K562 (cell line): ENCODE measurements at regions of chr20 and their contacts with region 1.

Region 1: GRCh38 chr20:37850724-37851355 is 52.1 kb upstream of the VSTM2L start:
- DNase-seq: peak; percentile 42 to 94 (median 68)
- ATAC-seq: peak; percentile 96
- H3K4me3 ChIP-seq: no peak overlapping the region
- H3K27ac ChIP-seq: peak overlapping the region; percentile 49
- H3K4me1 ChIP-seq: peaks cover 16 to 30% of the 10 kb centered on the region in 2 experiments; a peak in 4 of 5 replicates
- H3K27me3 ChIP-seq: no peaks in the 10 kb centered on the region
- CTCF ChIP-seq: no peak
- EP300 ChIP-seq: peak; percentile 97
- POLR2A ChIP-seq: no peak
- RAD21 ChIP-seq: peak in 1 of 2 experiments; percentile 27; a peak in 1 of 4 replicates

Region 2: GRCh38 chr20:37789408-37789807 is 61.4 kb before region 1 on chr20:
- CTCF ChIA-PET with region 1: no interaction called
- POLR2A ChIA-PET with region 1: no interaction called
- in situ Hi-C with region 1: no loop called
- intact Hi-C with region 1: no loop called
- DNase-seq: no peak
- ATAC-seq: no peak
- H3K4me3 ChIP-seq: no peak overlapping the region
- H3K27ac ChIP-seq: no peak overlapping the region
- H3K4me1 ChIP-seq: no peaks in the 10 kb centered on the region
- H3K27me3 ChIP-seq: no peaks in the 10 kb centered on the region
- CTCF ChIP-seq: no peak
- EP300 ChIP-seq: no peak
- POLR2A ChIP-seq: no peak
- RAD21 ChIP-seq: no peak

Region 3: GRCh38 chr20:37833221-37833896 is 17.5 kb before region 1 on chr20:
- CTCF ChIA-PET with region 1: no interaction called
- POLR2A ChIA-PET with region 1: interaction called, 6 read pairs
- in situ Hi-C with region 1: no loop called
- intact Hi-C with region 1: loop called (anchors 1 kb)
- DNase-seq: peak in 2 of 4 experiments; percentile 71 to 72
- ATAC-seq: peak; percentile 91
- H3K4me3 ChIP-seq: no peak overlapping the region
- H3K27ac ChIP-seq: no peak overlapping the region
- H3K4me1 ChIP-seq: peaks cover 7 to 10% of the 10 kb centered on the region in 2 experiments; a peak in 3 of 5 replicates
- H3K27me3 ChIP-seq: no peaks in the 10 kb centered on the region
- CTCF ChIP-seq: no peak
- EP300 ChIP-seq: peak; percentile 50; the same call in 1 of the 2 replicates
- POLR2A ChIP-seq: no peak
- RAD21 ChIP-seq: no peak